ENCODE measurements at regions of chr2 and their contacts with region 1.

Region 1: GRCh38 chr2:201071479-201072200 is at the starts of genes HYCC2 and NDUFB3:
- DNase-seq: peak; percentile 96
- H3K4me3 ChIP-seq: peak within 1 kb of the TSS; percentile 71
- H3K4me3 Mint-ChIP-seq: peak within 1 kb of the TSS; percentile 87
- H3K27ac Mint-ChIP-seq: peak within 1 kb of the TSS; percentile 89
- H3K4me1 ChIP-seq: peaks cover 24% of the 10 kb centered on the region
- H3K4me1 Mint-ChIP-seq: peaks cover 11% of the 10 kb centered on the region
- H3K27me3 ChIP-seq: no peaks in the 10 kb centered on the region
- H3K27me3 Mint-ChIP-seq: no peaks in the 10 kb centered on the region
- CTCF ChIP-seq: peak; percentile 7 to 29
- total RNA-seq, gene HYCC2: 21.8 and 21.9 TPM in 2 replicates
- total RNA-seq, gene NDUFB3: 117 and 118 TPM in 2 replicates

Region 2: DNA sequence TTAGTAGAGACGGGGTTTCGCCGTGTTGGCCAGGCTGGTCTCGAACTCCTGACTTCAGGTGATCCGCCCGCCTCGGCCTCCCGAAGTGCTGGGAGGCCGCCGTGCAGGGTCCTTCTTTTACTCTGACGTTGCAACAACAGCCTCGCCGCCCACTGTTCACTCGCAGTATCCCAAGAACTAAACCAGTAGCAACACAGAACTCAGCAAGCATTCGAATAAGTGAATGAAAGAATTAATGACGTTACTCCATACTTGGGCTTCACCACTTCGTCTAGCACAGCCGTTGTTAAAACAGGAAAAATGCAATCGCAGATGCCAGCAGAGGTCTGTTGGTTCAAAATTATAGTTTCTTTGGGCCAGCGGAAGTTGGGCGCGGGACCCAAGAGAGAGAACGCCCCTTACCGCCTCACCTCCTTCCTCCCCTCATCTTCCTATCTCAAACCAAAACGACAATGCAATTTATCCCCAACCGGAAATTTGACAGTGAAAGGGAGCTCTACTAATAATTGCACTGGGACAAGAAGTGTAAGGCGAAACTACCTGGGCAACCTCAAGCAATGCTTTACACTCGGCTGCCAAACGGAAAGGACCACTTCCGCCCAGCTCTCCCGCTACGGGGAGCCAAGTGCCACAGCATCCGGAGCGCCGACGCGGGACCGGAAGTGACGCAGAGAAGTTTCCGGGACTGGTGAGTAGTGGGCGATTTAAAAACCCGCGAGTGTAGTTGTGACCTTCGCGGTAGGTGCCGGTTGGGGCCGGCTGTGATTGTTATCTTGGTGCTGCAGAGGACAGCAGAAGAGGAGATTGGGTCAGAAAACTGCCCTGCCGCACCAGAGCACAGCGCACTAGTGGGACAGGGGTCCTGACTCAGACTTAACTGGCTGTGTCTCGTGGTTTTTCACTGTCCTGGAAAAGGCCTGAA is 182.7 kb before region 1 on chr2 and contains the starts of genes NIF3L1 and PPIL3:
- CTCF ChIA-PET with region 1: no interaction called
- POLR2A ChIA-PET with region 1: interaction called, 7 read pairs
- intact Hi-C with region 1: loop called (anchors 1 kb)
- DNase-seq: peak; percentile 98 to 99
- H3K4me3 ChIP-seq: peak within 1 kb of the TSS; percentile 56
- H3K4me3 Mint-ChIP-seq: peak within 1 kb of the TSS; percentile 89
- H3K27ac Mint-ChIP-seq: peak within 1 kb of the TSS; percentile 97
- H3K4me1 ChIP-seq: 0 out of 2 replicates have a peak, but pooled peaks cover 3% of the 10 kb centered on the region
- H3K4me1 Mint-ChIP-seq: peaks cover 19% of the 10 kb centered on the region
- H3K27me3 ChIP-seq: no peaks in the 10 kb centered on the region
- H3K27me3 Mint-ChIP-seq: no peaks in the 10 kb centered on the region
- CTCF ChIP-seq: no peak
- total RNA-seq, gene NIF3L1: 40.7 and 49.7 TPM in 2 replicates
- total RNA-seq, gene PPIL3: 17.6 and 25.0 TPM in 2 replicates

Region 3: GRCh38 chr2:200901459-200902072 is 170.1 kb before region 1 on chr2:
- CTCF ChIA-PET with region 1: interaction called, 24 read pairs
- POLR2A ChIA-PET with region 1: no interaction called
- intact Hi-C with region 1: loop called (anchors 1 kb)
- DNase-seq: peak; percentile 84 to 86
- H3K4me3 ChIP-seq: no peak overlapping the region
- H3K4me3 Mint-ChIP-seq: no peak overlapping the region
- H3K27ac Mint-ChIP-seq: no peak overlapping the region
- H3K4me1 ChIP-seq: no peaks in the 10 kb centered on the region
- H3K4me1 Mint-ChIP-seq: peaks cover 6% of the 10 kb centered on the region
- H3K27me3 ChIP-seq: no peaks in the 10 kb centered on the region
- H3K27me3 Mint-ChIP-seq: no peaks in the 10 kb centered on the region
- CTCF ChIP-seq: peak; percentile 85 to 90

Region 4: GRCh38 chr2:200963124-200963917 is 108.3 kb before region 1 on chr2 and contains the start of gene ORC2:
- CTCF ChIA-PET with region 1: interaction called, 38 read pairs
- POLR2A ChIA-PET with region 1: interaction called, 11 read pairs
- intact Hi-C with region 1: loop called (anchors 1 kb)
- DNase-seq: peak; percentile 96 to 98
- H3K4me3 ChIP-seq: peak within 1 kb of the TSS; percentile 64
- H3K4me3 Mint-ChIP-seq: peak within 1 kb of the TSS; percentile 91
- H3K27ac Mint-ChIP-seq: peak within 1 kb of the TSS; percentile 97
- H3K4me1 ChIP-seq: peaks cover 30% of the 10 kb centered on the region
- H3K4me1 Mint-ChIP-seq: peaks cover 29% of the 10 kb centered on the region
- H3K27me3 ChIP-seq: no peaks in the 10 kb centered on the region
- H3K27me3 Mint-ChIP-seq: no peaks in the 10 kb centered on the region
- CTCF ChIP-seq: peak; percentile 70 to 76
- total RNA-seq, gene ORC2: 45.5 and 47.3 TPM in 2 replicates

Region 5: DNA sequence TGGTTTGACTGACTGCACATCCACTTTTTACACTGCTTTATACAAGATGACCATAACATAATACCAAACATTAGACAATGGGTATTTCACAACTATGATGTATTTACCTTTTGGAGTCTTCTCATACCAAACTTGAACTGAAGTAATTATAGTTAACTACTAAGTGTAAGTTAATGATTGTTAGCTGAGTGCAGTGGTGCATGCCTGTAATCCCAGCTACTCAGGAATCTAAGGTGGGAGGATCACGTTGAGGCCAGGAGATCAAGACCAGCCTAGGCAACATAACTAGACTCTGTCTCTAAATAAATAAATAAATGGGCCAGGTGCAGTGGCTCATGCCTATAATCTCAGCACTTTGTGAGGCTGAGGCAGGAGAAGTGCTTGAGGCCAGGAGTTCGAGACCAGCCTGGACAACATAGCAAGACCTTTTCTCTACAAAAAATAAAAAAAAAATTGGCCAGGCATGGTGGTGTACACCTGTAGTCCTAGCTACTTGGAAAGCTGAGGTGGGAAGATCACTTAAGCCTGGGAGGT is 63.3 kb before region 1 on chr2:
- CTCF ChIA-PET with region 1: interaction called, 5 read pairs
- POLR2A ChIA-PET with region 1: interaction called, 3 read pairs
- intact Hi-C with region 1: loop called (anchors 1 kb)
- DNase-seq: peak; percentile 78 to 87
- H3K4me3 ChIP-seq: no peak overlapping the region
- H3K4me3 Mint-ChIP-seq: peak overlapping the region; percentile 31
- H3K27ac Mint-ChIP-seq: peak overlapping the region; percentile 75
- H3K4me1 ChIP-seq: peaks cover 28% of the 10 kb centered on the region
- H3K4me1 Mint-ChIP-seq: peaks cover 19% of the 10 kb centered on the region
- H3K27me3 ChIP-seq: no peaks in the 10 kb centered on the region
- H3K27me3 Mint-ChIP-seq: no peaks in the 10 kb centered on the region
- CTCF ChIP-seq: no peak

Region 6: DNA sequence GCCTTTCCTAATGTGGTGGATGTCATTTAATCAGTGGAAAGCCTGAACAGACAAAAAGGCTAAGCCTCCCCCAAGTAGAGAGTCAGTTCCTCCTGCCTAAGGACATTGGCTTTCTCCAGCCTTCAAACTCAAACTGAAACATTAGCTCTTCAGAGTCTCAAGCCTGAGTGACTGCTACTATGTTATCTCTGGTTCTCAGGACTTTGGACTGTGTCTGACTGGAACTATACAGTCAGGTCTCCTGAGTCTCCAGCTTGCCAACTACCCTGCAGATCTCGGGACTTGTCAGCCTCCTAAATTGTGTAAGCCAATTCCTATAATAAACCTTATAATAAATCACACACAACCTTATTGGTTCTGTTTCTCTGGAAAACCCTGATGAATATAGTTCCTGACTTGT is 12.7 kb before region 1 on chr2:
- CTCF ChIA-PET with region 1: interaction called, 10 read pairs
- POLR2A ChIA-PET with region 1: no interaction called
- intact Hi-C with region 1: no loop called
- DNase-seq: peak in 1 of 2 experiments; percentile 19
- H3K4me3 ChIP-seq: no peak overlapping the region
- H3K4me3 Mint-ChIP-seq: no peak overlapping the region
- H3K27ac Mint-ChIP-seq: no peak overlapping the region
- H3K4me1 ChIP-seq: peaks cover 30% of the 10 kb centered on the region
- H3K4me1 Mint-ChIP-seq: peaks cover 18% of the 10 kb centered on the region
- H3K27me3 ChIP-seq: no peaks in the 10 kb centered on the region
- H3K27me3 Mint-ChIP-seq: no peaks in the 10 kb centered on the region
- CTCF ChIP-seq: no peak

Region 7: GRCh38 chr2:201158111-201158929 is 86.7 kb after region 1 on chr2:
- CTCF ChIA-PET with region 1: interaction called, 22 read pairs
- POLR2A ChIA-PET with region 1: no interaction called
- intact Hi-C with region 1: loop called (anchors 1 kb)
- DNase-seq: peak; percentile 84 to 86
- H3K4me3 ChIP-seq: no peak overlapping the region
- H3K4me3 Mint-ChIP-seq: peak overlapping the region; percentile 40
- H3K27ac Mint-ChIP-seq: peak overlapping the region; percentile 86
- H3K4me1 ChIP-seq: peaks cover 12% of the 10 kb centered on the region
- H3K4me1 Mint-ChIP-seq: peaks cover 13% of the 10 kb centered on the region
- H3K27me3 ChIP-seq: no peaks in the 10 kb centered on the region
- H3K27me3 Mint-ChIP-seq: no peaks in the 10 kb centered on the region
- CTCF ChIP-seq: peak; percentile 71 to 84